ENCODE measurements at regions of chr19 and their contacts with region 1.

Region 1: DNA sequence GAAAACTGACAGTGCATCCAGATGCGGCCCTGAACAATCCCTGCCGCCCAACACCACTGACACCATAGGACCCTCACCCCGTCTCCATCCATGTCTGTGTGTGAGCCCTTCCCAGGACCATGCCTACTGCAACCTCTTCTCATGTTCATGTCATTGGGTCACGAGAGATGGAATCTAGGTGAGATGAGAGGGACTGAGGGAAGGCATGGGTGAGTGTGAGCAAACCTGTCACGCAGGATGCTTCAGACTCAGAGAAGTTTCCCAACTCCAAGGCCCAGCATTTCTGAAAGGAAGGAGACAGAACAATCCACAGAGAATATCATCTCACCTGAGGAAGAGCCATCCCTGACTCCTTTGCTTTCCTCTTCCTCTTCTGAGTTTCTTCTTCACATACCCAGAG is 5.7 kb downstream of the ZNF888 start:
- DNase-seq: no peak

Region 2: DNA sequence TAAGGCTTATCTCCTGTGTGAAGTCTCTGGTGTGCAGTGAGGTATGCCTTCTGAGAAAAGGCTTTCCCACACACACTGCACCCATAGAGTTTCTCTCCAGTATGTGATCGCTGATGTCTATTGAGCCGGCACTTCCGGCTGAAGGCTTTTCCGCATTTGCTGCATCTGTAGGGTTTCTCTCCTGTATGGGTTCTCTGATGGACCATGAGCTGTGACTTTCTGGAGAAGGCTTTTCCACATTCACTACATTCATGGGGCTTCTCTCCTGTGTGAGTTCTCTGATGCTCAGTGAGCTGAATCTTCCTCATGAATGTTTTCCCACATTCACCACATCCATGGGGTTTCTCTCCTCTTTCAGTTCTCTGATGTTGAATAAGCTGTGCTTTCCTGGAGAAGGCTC is 1044.4 kb before region 1 on chr19:
- intact Hi-C with region 1: loop called in 1 of 2 experiments (anchors 5 kb)
- DNase-seq: no peak

Region 3: DNA sequence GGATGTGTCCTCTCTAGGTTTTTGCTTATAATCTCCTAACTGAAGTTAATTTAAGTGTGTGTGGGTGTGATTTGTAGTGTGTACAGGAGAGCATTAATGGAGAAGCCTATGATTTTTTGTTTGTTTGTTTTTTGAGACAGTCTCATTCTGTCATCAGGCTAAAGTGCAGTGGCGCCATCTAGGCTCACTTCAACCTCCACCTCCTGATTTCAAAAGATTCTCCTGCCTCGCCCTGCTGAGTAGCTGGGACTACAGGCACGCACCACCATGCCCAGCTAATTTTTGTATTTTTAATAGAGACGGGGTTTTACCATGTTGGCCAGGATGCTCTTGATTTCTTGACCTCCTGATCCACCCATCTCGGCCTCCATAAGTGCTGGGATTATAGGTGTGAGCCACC is 326.8 kb before region 1 on chr19:
- intact Hi-C with region 1: no loop called
- DNase-seq: no peak